Panc1 (cell line): ENCODE measurements at regions of chr20 and their contacts with region 1.

Region 1: DNA sequence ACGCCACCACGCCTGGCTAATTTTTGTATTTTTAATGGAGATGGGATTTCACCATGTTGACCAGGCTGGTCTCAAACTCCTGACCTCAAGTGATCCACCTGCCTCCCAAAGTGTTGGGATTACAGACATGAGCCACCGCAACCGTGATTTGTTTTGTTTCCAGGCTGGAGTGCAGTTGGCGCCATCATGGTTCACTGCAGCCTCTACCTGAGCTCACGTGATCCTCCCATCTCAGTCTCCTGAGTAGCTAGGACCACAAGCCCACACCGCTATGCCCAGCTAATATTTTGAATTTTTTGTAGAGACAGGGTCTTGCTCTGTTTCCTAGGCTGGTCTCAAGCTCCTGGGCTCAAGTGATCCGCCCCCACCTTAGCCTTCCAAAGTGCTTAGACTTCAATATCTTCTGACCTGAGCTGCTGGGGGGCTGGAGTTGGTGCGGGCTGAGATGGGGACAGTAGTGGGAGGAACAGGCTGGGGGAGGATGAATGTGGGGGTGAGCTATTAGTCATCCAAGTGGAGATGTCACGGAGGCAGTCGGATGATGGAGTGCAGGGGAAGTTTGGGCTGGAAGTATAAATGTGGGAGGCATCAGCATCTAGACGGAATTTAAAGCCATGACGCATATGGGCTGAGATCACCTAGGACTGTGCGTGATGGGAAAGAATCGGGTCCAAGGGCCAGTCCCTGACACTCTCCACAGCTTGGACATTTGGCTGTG is 23.1 kb upstream of the ZMYND8 start:
- DNase-seq: no peak
- ATAC-seq: no peak
- H3K4me3 ChIP-seq: no peak overlapping the region
- H3K27ac ChIP-seq: peak overlapping the region; percentile 85
- H3K4me1 ChIP-seq: peaks cover 34% of the 10 kb centered on the region
- H3K27me3 ChIP-seq: no peaks in the 10 kb centered on the region
- CTCF ChIP-seq: no peak

Region 2: GRCh38 chr20:47196091-47197081 is 183.2 kb before region 1 on chr20:
- CTCF ChIA-PET with region 1: interaction called, 12 read pairs
- POLR2A ChIA-PET with region 1: no interaction called
- in situ Hi-C with region 1: no loop called
- intact Hi-C with region 1: loop called (anchors 5 kb)
- DNase-seq: no peak
- ATAC-seq: peak; percentile 90
- H3K4me3 ChIP-seq: peak overlapping the region in 1 of 2 experiments; percentile 17; a peak in 1 of 4 replicates
- H3K27ac ChIP-seq: peak overlapping the region; percentile 69; the same call in 1 of the 2 replicates
- H3K4me1 ChIP-seq: no peaks in the 10 kb centered on the region
- H3K27me3 ChIP-seq: no peaks in the 10 kb centered on the region
- CTCF ChIP-seq: peak; percentile 98

Region 3: DNA sequence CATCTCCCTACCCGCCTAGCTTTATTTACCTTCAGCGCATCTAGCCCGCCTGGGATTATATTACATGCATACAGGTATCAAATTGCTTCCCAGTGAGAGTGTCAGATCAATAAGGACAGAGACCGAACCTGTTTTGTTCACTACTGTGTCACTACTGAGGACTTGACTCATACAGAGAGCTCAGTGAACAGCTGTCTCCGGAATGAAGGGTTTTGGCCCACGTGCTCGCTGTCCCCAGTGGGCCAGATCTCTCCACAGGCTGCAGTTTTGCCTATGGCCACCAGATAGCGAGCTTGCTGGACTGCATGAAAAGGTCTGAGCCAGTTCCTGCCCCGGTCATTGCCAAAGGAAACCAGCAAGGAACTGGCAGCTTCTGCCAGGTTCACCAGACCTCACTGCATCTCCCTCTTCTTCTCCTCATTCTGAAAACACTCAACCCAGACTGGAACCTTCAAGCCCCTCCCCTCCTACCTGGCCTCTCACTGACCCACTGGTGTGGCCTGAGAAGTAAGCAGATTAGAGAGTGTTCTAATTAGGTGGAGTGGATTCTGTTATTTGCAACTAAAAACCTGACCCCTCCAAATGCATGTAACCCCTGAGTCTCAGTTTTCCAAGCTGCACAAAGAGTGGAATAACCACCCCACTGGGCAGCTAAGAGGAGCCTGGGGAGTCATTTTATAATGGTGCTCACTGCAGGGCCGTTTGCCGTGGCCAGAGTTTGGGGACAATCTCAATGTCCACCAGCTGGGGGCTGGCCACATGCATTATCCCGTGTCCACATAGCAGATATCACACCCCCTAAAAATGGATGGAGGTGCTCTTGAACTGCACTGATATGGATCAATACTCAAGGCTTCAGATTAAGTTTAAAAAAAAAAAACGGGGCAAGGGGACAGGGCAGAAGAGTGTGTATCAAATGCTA is 173.8 kb before region 1 on chr20:
- CTCF ChIA-PET with region 1: interaction called, 31 read pairs
- POLR2A ChIA-PET with region 1: no interaction called
- in situ Hi-C with region 1: no loop called
- intact Hi-C with region 1: no loop called
- DNase-seq: no peak
- ATAC-seq: peak; percentile 81
- H3K4me3 ChIP-seq: no peak overlapping the region
- H3K27ac ChIP-seq: 0 out of 2 replicates have a peak overlapping the region, but pooled peaks have one; percentile 6
- H3K4me1 ChIP-seq: 0 out of 2 replicates have a peak, but pooled peaks cover 4% of the 10 kb centered on the region
- H3K27me3 ChIP-seq: no peaks in the 10 kb centered on the region
- CTCF ChIP-seq: peak; percentile 83

Region 4: DNA sequence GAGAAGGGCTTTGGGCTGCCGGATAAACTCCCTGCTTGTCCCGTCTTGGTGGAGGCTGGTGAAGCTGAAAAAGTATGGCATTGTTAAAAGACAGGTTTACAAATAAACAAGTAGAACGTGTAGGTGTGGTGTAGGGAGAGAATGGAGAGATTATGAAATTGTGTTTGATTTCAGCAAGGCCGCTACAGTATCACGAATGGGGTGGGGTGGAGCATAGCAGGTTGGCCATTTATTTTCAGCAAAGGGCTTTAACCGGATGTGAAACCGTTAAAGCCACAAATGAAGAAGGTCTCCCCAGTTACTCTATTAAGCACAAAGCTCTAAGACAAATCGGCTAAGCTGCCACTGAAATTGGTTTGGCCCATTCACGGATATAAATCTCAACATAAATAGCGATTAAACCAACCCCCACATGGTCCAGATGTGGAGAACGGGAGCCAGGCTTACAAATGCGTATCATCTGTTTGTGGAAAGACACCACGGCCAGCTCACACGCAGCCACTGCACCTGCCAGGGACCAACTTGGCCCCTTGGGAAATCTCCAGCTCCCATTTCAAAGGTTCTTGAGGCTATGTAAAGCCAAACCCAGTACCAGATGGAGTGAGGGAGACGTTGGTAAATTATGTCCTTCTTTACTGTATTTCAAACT is 117.1 kb before region 1 on chr20:
- CTCF ChIA-PET with region 1: interaction called, 3 read pairs
- POLR2A ChIA-PET with region 1: interaction called, 12 read pairs
- in situ Hi-C with region 1: no loop called
- intact Hi-C with region 1: no loop called
- DNase-seq: no peak
- ATAC-seq: no peak
- H3K4me3 ChIP-seq: no peak overlapping the region
- H3K27ac ChIP-seq: peak overlapping the region; percentile 45; the same call in 1 of the 2 replicates
- H3K4me1 ChIP-seq: 0 out of 2 replicates have a peak, but pooled peaks cover 4% of the 10 kb centered on the region
- H3K27me3 ChIP-seq: no peaks in the 10 kb centered on the region
- CTCF ChIP-seq: no peak

Region 5: GRCh38 chr20:47272893-47273590 is 106.5 kb before region 1 on chr20:
- CTCF ChIA-PET with region 1: interaction called, 97 read pairs
- POLR2A ChIA-PET with region 1: interaction called, 5 read pairs
- in situ Hi-C with region 1: no loop called
- intact Hi-C with region 1: loop called (anchors 1 kb)
- DNase-seq: peak; percentile 67
- ATAC-seq: peak; percentile 68
- H3K4me3 ChIP-seq: no peak overlapping the region
- H3K27ac ChIP-seq: peak overlapping the region; percentile 97
- H3K4me1 ChIP-seq: peaks cover 48% of the 10 kb centered on the region
- H3K27me3 ChIP-seq: no peaks in the 10 kb centered on the region
- CTCF ChIP-seq: peak; percentile 86

Region 6: GRCh38 chr20:47326658-47327268 is 52.8 kb before region 1 on chr20:
- CTCF ChIA-PET with region 1: interaction called, 6 read pairs
- POLR2A ChIA-PET with region 1: interaction called, 14 read pairs
- in situ Hi-C with region 1: no loop called
- intact Hi-C with region 1: loop called (anchors 5 kb)
- DNase-seq: no peak
- ATAC-seq: no peak
- H3K4me3 ChIP-seq: no peak overlapping the region
- H3K27ac ChIP-seq: peak overlapping the region; percentile 99
- H3K4me1 ChIP-seq: peaks cover 67% of the 10 kb centered on the region
- H3K27me3 ChIP-seq: no peaks in the 10 kb centered on the region
- CTCF ChIP-seq: no peak

Region 7: GRCh38 chr20:47355489-47356219 is 23.9 kb before region 1 on chr20:
- CTCF ChIA-PET with region 1: interaction called, 7 read pairs
- POLR2A ChIA-PET with region 1: interaction called, 17 read pairs
- in situ Hi-C with region 1: no loop called
- intact Hi-C with region 1: no loop called
- DNase-seq: no peak
- ATAC-seq: no peak
- H3K4me3 ChIP-seq: peak overlapping the region; percentile 28 to 36
- H3K27ac ChIP-seq: peak overlapping the region; percentile 100
- H3K4me1 ChIP-seq: peaks cover 100% of the 10 kb centered on the region
- H3K27me3 ChIP-seq: no peaks in the 10 kb centered on the region
- CTCF ChIP-seq: no peak